Endothelial cell of umbilical vein (primary cell): ENCODE measurements at regions of chr1 and their contacts with region 1.

Region 1: GRCh38 chr1:74771913-74772515 is 39.1 kb downstream of the TYW3 start:
- DNase-seq: peak; percentile 58
- H3K4me3 ChIP-seq: no peak overlapping the region
- H3K27ac ChIP-seq: no peak overlapping the region
- H3K4me1 ChIP-seq: no peaks in the 10 kb centered on the region
- H3K27me3 ChIP-seq: peaks cover 8 to 44% of the 10 kb centered on the region in 2 experiments
- CTCF ChIP-seq: peak; percentile 48 to 52
- POLR2A ChIP-seq: no peak

Region 2: DNA sequence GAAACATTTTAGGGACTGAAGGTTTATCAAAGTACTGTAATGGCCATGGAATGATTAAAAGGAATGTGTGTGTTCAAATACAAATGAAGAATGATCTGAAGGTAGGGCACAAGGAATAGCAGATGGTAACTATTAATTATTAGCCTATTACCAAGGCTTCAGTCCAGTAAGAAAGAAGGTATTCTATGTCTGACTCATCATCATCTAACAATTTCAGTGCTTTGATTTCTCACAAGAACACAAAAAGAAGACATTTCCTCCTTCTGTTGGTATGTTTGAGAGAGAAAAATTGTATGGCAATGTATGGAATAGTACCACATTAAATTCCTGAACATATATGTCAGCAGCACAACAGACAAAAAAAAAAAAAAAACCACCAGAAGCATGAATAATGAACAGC is 18.4 kb after region 1 on chr1:
- CTCF ChIA-PET with region 1: interaction called, 16 read pairs
- POLR2A ChIA-PET with region 1: no interaction called
- dilution Hi-C with region 1: no loop called
- intact Hi-C with region 1: no loop called
- DNase-seq: no peak
- H3K4me3 ChIP-seq: no peak overlapping the region
- H3K27ac ChIP-seq: no peak overlapping the region
- H3K4me1 ChIP-seq: no peaks in the 10 kb centered on the region
- H3K27me3 ChIP-seq: no peaks in the 10 kb centered on the region
- CTCF ChIP-seq: no peak
- POLR2A ChIP-seq: no peak

Region 3: GRCh38 chr1:74835051-74835450 is 63.0 kb after region 1 on chr1:
- CTCF ChIA-PET with region 1: no interaction called
- POLR2A ChIA-PET with region 1: no interaction called
- dilution Hi-C with region 1: no loop called
- intact Hi-C with region 1: no loop called
- DNase-seq: no peak
- H3K4me3 ChIP-seq: no peak overlapping the region
- H3K27ac ChIP-seq: no peak overlapping the region
- H3K4me1 ChIP-seq: no peaks in the 10 kb centered on the region
- H3K27me3 ChIP-seq: no peaks in the 10 kb centered on the region
- CTCF ChIP-seq: no peak
- POLR2A ChIP-seq: no peak

Region 4: DNA sequence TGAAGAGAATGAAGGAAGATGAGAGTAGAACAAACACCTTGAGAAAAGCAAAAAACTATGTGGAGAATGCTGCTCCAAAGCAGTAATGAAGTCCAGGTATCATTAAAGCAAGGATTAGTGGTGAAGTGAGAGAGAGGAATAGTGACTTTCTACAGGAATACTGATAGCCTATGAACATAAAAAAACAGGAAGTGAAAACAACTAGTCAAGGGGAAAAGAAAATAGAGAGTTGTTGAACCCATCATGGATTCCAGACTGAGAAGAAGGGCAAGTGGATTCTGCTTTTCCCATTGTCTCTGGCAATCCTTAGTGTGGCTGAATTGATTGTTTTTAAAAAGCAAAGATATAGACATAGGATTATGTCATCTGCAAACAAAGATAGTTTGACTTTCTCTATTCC is 242.2 kb after region 1 on chr1:
- CTCF ChIA-PET with region 1: no interaction called
- POLR2A ChIA-PET with region 1: no interaction called
- dilution Hi-C with region 1: no loop called
- intact Hi-C with region 1: no loop called
- DNase-seq: no peak
- H3K4me3 ChIP-seq: no peak overlapping the region
- H3K27ac ChIP-seq: no peak overlapping the region
- H3K4me1 ChIP-seq: no peaks in the 10 kb centered on the region
- H3K27me3 ChIP-seq: no peaks in the 10 kb centered on the region
- CTCF ChIP-seq: no peak
- POLR2A ChIP-seq: no peak

Region 5: DNA sequence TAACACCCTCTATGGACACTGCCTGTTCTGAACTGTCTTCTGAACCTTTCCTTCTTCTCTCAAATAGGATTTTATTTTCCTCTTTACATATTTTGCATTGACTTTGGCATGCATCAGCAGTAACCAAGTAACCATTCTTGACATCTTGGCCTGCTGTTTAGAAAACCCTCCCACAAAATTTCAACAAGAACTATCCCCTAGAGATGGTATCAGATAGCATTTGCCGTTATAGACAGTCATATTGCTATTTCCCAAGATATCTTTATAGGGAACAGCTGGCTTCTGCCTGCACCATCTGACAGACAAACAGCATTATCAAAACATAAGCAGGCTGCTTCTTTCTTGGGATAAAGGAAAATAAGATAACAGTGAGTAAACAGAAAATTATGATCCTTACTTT is 416.9 kb after region 1 on chr1:
- CTCF ChIA-PET with region 1: interaction called, 3 read pairs
- POLR2A ChIA-PET with region 1: no interaction called
- dilution Hi-C with region 1: loop called (anchors 25 kb)
- intact Hi-C with region 1: no loop called
- DNase-seq: no peak
- H3K4me3 ChIP-seq: no peak overlapping the region
- H3K27ac ChIP-seq: no peak overlapping the region
- H3K4me1 ChIP-seq: no peaks in the 10 kb centered on the region
- H3K27me3 ChIP-seq: peaks cover 5 to 10% of the 10 kb centered on the region in 2 experiments
- CTCF ChIP-seq: no peak
- POLR2A ChIP-seq: no peak

Region 6: DNA sequence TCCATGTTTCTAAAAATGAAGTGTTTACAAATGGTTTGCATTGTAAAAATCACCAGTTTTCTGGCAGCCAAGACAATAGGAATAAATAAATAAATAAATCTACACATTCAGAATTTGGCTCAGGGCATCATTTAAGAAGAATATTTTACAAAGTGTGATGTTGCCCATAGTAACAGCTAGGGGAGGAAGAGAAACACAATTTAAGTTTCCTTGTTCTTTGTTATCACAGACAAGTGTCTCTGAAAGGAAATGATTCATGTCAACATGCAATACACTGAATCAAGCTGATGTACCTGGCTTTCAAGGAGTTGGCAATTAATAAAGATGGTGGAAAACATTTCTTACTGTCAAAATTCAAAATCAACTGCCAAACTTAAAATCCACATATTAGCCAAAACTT is 436.8 kb after region 1 on chr1:
- CTCF ChIA-PET with region 1: interaction called, 279 read pairs
- POLR2A ChIA-PET with region 1: no interaction called
- dilution Hi-C with region 1: no loop called
- intact Hi-C with region 1: no loop called
- DNase-seq: peak; percentile 77
- H3K4me3 ChIP-seq: no peak overlapping the region
- H3K27ac ChIP-seq: no peak overlapping the region
- H3K4me1 ChIP-seq: peaks cover 4% of the 10 kb centered on the region
- H3K27me3 ChIP-seq: no peaks in the 10 kb centered on the region
- CTCF ChIP-seq: no peak
- POLR2A ChIP-seq: no peak